ENCODE measurements at regions of chr12 and their contacts with region 1.

Region 1: GRCh38 chr12:80186727-80187217 is 87.4 kb downstream of the OTOGL start:
- DNase-seq: peak in 2 of 3 donors; percentile 37 to 57
- ATAC-seq: peak; percentile 90 to 92
- H3K4me3 ChIP-seq: no peak overlapping the region
- H3K27ac ChIP-seq: peak overlapping the region; percentile 99
- H3K4me1 ChIP-seq: peaks cover 3% of the 10 kb centered on the region
- H3K27me3 ChIP-seq: no peaks in the 10 kb centered on the region

Region 2: DNA sequence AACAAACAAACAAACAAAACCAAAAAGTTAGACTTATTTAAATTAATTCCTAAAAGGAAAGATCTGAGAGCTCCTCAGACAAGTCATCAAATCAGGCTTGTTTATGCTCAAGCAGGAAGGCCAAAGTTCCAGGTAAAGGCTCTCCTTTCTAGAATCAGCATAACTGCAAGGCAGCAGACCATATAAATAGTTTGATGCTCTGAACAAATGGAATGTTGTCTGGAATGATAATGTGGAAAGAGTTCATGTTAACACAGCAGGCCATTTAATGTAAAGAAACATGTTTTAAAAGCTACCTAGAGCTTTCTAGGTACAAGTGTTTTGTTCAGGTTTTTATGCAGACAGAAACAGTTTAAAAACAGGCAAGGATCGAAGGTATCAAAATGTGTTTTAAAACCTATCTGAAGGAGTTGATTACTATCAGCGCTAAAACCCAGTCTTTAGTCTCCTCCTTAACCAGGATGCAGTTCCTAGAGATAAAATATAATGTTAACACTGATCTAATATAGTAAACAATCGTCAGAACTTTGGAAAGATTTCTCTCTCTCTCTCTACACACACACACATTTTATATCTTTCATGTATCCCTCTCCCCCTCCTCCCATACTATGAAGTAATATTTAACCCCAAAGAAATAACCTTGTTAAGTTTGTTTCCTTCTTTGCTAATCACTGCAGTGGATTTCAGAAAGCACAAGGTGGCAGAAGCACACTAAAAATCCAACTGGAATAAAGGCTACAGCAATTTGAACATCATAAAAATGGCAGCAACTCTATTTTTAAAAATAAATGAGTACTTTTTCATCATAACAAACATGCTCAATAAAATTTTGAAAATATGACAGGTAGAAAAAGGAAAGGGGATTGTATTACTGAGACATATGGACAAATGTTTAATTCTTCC is 631.5 kb before region 1 on chr12:
- intact Hi-C with region 1: loop called in 3 of 4 experiments (anchors 5 to 10 kb)
- DNase-seq: no peak
- ATAC-seq: peak in 1 of 2 donors; percentile 36
- H3K4me3 ChIP-seq: no peak overlapping the region
- H3K27ac ChIP-seq: no peak overlapping the region
- H3K4me1 ChIP-seq: no peaks in the 10 kb centered on the region
- H3K27me3 ChIP-seq: no peaks in the 10 kb centered on the region

Region 3: GRCh38 chr12:79766705-79767464 is 419.9 kb before region 1 on chr12:
- intact Hi-C with region 1: loop called in 1 of 4 experiments (anchors 10 kb)
- DNase-seq: no peak
- ATAC-seq: no peak
- H3K4me3 ChIP-seq: no peak overlapping the region
- H3K27ac ChIP-seq: no peak overlapping the region
- H3K4me1 ChIP-seq: no peaks in the 10 kb centered on the region
- H3K27me3 ChIP-seq: no peaks in the 10 kb centered on the region

Region 4: DNA sequence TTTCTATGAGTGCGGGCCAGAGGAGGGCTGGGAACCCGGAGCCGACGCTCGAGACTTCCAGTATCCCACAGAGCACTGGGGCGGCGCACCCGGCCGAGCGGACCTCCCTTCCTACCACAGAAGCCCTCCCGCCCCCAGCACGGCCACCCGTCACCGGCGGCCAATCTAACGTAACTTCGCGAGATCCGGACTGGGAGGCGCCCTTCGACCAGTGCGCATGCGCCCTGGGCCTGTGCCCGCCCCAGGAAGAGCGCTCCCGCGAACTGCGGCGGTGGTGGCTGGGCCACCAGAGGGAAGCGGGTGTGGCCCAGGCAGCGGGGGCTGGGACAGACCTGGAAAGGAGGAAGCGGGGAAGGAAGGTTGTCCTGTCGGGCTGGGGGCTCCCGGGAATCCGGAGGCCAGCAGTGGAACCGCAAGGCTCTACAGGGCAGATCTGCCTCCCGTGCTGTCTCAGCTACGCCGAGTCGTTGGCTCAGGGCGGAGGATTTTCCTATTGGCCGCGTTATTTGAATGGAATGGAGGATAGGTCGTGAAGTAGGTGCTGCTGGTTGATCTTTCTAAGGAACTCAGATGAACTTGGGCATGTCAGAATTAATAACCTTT is 251.7 kb before region 1 on chr12 and contains the start of gene PPP1R12A:
- intact Hi-C with region 1: loop called in 1 of 4 experiments (anchors 5 kb)
- DNase-seq: peak; percentile 98 to 99 (median 99)
- ATAC-seq: peak; percentile 98 to 99
- H3K4me3 ChIP-seq: peak within 1 kb of the TSS; percentile 76
- H3K27ac ChIP-seq: peak within 1 kb of the TSS; percentile 95
- H3K4me1 ChIP-seq: no peaks in the 10 kb centered on the region
- H3K27me3 ChIP-seq: no peaks in the 10 kb centered on the region
- total RNA-seq, gene PPP1R12A: 66.8 to 77.1 (median 73.4) TPM

Region 5: DNA sequence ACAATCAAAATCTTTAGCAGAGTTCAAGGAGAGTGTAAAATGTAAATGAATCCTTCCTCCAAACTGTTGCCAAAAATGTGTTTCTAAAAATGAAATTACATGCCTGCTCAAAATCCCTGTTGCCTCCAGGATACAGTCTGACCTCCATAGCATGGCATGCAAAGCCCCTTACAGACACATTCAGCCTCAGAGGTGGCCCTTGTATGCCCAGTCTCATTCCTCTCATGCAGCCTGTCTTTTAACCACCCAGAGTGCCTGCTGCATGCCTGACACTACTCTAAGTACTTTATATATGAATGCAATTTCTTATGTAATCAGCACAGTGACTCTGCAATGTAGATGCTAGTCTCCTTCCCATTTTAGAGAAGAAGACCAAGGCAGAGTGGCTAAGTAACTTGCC is 232.9 kb after region 1 on chr12:
- intact Hi-C with region 1: no loop called
- DNase-seq: no peak
- ATAC-seq: no peak
- H3K4me3 ChIP-seq: no peak overlapping the region
- H3K27ac ChIP-seq: no peak overlapping the region
- H3K4me1 ChIP-seq: peaks cover 2% of the 10 kb centered on the region
- H3K27me3 ChIP-seq: no peaks in the 10 kb centered on the region